Posterior vena cava (tissue), 2 donors: ENCODE measurements at regions of chr4 and their contacts with region 1.

Region 1: DNA sequence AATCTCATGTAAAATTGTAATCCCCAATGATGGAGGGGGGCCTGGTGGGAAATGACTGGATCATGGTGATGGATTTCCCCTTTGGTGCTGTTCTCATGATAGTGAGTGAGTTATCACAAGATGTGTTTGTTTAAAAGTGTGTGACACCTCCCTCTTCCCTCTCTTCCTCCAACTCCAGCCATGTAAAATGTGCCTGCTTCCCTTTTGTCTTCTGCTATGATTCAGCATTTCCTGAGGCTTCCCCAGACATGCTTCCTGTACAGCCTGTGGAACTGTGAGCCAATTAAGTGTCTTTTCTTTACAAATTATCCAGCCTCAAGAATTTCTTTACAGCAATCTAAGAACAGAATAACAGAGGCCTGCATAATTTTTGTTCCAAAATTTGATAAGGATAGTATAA is 85.2 kb downstream of the ANAPC10 start:
- DNase-seq: no peak

Region 2: GRCh38 chr4:143302536-143302935 is 1710.3 kb before region 1 on chr4:
- intact Hi-C with region 1: no loop called
- DNase-seq: no peak

Region 3: GRCh38 chr4:144649646-144650045 is 363.2 kb before region 1 on chr4:
- intact Hi-C with region 1: loop called in 1 of 2 experiments (anchors 5 kb)
- DNase-seq: no peak